Endothelial cell of umbilical vein (primary cell): ENCODE measurements at regions of chr1 and their contacts with region 1.

Region 1: GRCh38 chr1:164786980-164787833 is 228.2 kb downstream of the PBX1 start:
- DNase-seq: peak; percentile 70
- H3K4me3 ChIP-seq: no peak overlapping the region
- H3K27ac ChIP-seq: no peak overlapping the region
- H3K4me1 ChIP-seq: no peaks in the 10 kb centered on the region
- H3K27me3 ChIP-seq: no peaks in the 10 kb centered on the region
- CTCF ChIP-seq: peak; percentile 92
- POLR2A ChIP-seq: no peak

Region 2: DNA sequence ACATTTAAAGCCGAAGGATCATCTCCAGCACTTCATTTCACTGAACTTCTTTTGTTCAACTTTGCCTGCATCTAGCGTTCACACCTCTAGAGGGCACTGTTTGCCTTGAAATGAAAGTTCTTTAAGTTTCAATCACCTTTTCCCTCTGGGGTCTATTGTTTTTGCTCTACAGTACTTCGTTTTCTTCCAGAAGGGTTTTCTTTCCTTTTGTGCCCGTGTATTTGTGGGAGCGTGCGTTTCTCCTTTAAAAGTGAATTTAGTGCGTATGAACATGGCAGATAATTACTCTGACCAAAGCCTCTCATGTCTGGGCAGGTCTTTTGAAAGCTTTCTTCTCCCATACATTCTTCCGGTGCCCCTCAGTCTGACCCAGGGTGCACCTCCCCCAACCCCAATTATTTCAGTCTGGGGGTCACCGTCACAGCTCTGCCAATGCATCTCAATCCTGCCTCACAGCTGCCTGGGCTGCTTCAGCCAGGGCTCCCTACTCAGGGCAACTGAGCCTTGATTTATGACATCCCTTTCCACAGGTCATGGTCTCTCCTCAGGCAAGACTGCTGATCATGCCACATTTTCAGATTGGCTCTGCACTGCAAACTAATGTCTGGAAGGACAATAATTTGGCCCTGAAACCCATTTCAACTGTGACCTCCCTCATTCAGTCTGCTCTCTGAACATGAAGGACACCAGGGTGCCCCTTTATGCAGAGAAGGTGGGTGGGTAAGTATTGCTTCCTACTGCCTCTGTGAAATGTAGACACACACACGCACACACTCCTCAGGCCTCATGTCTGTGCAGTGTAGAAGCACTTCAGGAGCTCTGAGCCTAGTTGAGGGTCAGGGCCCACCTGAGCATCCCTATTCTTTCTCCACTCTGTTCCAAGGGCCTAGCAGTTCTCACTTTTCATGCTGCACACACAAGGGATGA is 1376.9 kb before region 1 on chr1:
- CTCF ChIA-PET with region 1: no interaction called
- POLR2A ChIA-PET with region 1: no interaction called
- dilution Hi-C with region 1: no loop called
- intact Hi-C with region 1: loop called (anchors 1 kb)
- DNase-seq: peak; percentile 66
- H3K4me3 ChIP-seq: no peak overlapping the region
- H3K27ac ChIP-seq: no peak overlapping the region
- H3K4me1 ChIP-seq: no peaks in the 10 kb centered on the region
- H3K27me3 ChIP-seq: peaks cover 0 to 2% of the 10 kb centered on the region in 2 experiments
- CTCF ChIP-seq: peak; percentile 67 to 72
- POLR2A ChIP-seq: no peak

Region 3: GRCh38 chr1:163561580-163562295 is 1225.5 kb before region 1 on chr1:
- CTCF ChIA-PET with region 1: interaction called, 10 read pairs
- POLR2A ChIA-PET with region 1: no interaction called
- dilution Hi-C with region 1: no loop called
- intact Hi-C with region 1: loop called (anchors 2 kb)
- DNase-seq: peak; percentile 27
- H3K4me3 ChIP-seq: no peak overlapping the region
- H3K27ac ChIP-seq: no peak overlapping the region
- H3K4me1 ChIP-seq: no peaks in the 10 kb centered on the region
- H3K27me3 ChIP-seq: no peaks in the 10 kb centered on the region
- CTCF ChIP-seq: peak; percentile 17 to 18
- POLR2A ChIP-seq: no peak

Region 4: DNA sequence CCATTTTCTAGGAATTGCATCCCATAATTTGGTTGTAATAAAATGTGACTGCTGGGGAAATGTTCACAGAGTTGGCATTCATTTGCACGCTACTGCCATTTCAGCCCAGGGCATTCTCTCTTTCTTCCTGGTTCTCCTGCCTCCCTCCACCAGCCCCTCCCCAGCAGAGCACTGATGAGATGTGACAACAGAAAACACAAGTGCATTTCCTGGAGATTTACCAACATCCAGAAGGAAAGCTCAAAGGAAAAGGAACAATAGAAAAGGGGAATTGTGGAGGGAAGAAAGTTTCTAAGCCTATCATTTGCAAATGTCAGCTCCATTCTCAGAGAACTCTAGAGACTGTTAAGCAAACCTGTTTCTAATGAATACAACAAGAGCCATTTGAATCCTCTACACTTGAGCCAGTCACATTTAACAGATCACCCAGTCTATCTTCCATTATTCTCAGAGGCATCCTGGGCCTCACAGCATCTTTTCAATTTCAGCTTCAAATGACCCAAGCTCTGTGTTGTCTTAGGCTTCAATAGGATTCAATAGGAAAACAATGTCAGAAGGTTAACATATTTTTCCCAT is 623.8 kb before region 1 on chr1:
- CTCF ChIA-PET with region 1: interaction called, 4 read pairs
- POLR2A ChIA-PET with region 1: no interaction called
- dilution Hi-C with region 1: no loop called
- intact Hi-C with region 1: loop called (anchors 1 kb)
- DNase-seq: no peak
- H3K4me3 ChIP-seq: no peak overlapping the region
- H3K27ac ChIP-seq: no peak overlapping the region
- H3K4me1 ChIP-seq: no peaks in the 10 kb centered on the region
- H3K27me3 ChIP-seq: no peaks in the 10 kb centered on the region
- CTCF ChIP-seq: no peak
- POLR2A ChIP-seq: no peak

Region 5: GRCh38 chr1:164558461-164559341 is 228.5 kb before region 1 on chr1 and contains the start of gene PBX1:
- CTCF ChIA-PET with region 1: interaction called, 10 read pairs
- POLR2A ChIA-PET with region 1: no interaction called
- dilution Hi-C with region 1: no loop called
- intact Hi-C with region 1: loop called (anchors 2 kb)
- DNase-seq: peak; percentile 99
- H3K4me3 ChIP-seq: peak within 1 kb of the TSS; percentile 88 to 99 (median 99)
- H3K27ac ChIP-seq: peak within 1 kb of the TSS; percentile 68
- H3K4me1 ChIP-seq: peaks cover 40% of the 10 kb centered on the region
- H3K27me3 ChIP-seq: no peaks in the 10 kb centered on the region
- CTCF ChIP-seq: no peak
- POLR2A ChIP-seq: peak; percentile 65
- total RNA-seq, gene PBX1: 22.2 and 24.1 TPM in 2 replicates

Region 6: DNA sequence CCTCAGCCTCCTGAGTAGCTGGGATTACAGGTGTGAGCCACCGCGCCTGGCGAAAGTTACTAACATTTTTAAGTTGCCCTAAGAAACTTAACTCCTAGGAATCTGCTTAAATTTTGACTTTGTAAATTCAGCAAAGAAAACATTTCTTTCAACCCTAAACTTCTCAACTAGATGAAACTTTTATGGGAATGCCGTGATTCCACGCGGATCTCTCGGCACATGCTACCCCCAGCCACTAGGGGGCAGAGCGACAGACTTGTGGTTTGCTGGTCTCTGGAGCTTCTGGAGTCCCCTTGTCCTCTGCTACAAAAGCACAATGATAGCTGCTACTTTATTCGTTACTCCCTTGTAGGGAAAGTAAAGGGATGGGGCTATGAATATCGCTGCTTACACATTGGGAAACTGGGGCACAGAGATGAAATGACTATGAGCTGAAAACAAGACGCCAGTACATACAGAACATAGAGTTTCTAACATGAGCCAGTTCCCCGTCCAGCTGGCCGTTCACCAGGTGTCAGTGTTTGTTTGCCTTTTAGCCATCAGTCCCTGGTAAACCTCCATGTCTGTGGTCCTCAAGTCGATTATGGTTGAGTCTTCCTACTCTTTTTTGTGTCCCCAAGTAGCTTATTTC is 113.5 kb before region 1 on chr1:
- CTCF ChIA-PET with region 1: interaction called, 55 read pairs
- POLR2A ChIA-PET with region 1: no interaction called
- dilution Hi-C with region 1: no loop called
- intact Hi-C with region 1: loop called (anchors 1 kb)
- DNase-seq: no peak
- H3K4me3 ChIP-seq: no peak overlapping the region
- H3K27ac ChIP-seq: no peak overlapping the region
- H3K4me1 ChIP-seq: no peaks in the 10 kb centered on the region
- H3K27me3 ChIP-seq: no peaks in the 10 kb centered on the region
- CTCF ChIP-seq: peak; percentile 52 to 63
- POLR2A ChIP-seq: no peak